Activated T-helper 2 cell treated with anti-CD3 and anti-CD28 coated beads, Interferon-gamma antibody, Interleukin-2, Interleukin-4, amounts not matched to agents 10 μg/mL and 5 μg/mL and 100 μg/mL, durations not matched to agents 14 hours and 24 hours and 36 hours (primary cell): ENCODE measurements at regions of chr15 and their contacts with region 1.

Region 1: DNA sequence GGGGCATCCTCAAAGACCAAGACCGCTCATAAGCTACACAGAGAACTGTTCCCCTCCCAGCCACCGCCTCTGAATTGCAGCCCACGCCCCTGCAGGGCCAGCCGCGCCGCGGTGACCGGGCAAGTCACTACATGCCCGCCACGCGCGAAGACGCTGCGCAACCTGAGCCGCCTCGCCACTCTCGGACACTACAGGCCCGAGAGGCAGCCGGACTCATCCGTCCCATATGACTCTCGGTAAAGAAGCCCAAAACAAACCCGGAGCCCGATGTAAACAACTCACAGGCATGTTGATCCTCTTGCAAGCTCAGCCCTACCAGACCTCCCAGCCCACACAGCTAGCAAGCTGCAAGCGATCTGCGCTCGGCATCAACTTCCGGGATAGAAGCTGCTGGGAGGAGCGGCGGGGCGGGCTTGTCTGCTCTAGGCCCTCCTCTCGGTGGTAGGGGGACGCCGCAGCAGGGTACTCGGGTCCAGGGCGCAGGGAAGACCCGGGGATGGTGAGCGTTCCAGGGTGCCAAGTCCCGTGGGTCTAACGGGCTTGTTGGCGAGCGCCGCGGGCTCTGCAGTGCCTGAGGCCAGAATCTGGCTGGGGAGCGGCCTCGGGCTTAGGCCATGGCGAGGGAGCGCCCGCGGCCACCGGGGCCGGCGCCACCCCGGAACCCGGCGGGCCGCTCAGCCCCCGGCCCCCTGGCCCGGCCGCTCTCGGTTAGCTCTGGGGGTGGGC is at the start of gene RPS27L:
- DNase-seq: peak; percentile 87
- H3K4me3 Mint-ChIP-seq: peak within 1 kb of the TSS; percentile 97
- H3K27ac Mint-ChIP-seq: peak within 1 kb of the TSS; percentile 97
- H3K4me1 Mint-ChIP-seq: peaks cover 14% of the 10 kb centered on the region
- H3K27me3 Mint-ChIP-seq: no peaks in the 10 kb centered on the region
- total RNA-seq, gene RPS27L: 164 and 167 TPM in 2 replicates

Region 2: DNA sequence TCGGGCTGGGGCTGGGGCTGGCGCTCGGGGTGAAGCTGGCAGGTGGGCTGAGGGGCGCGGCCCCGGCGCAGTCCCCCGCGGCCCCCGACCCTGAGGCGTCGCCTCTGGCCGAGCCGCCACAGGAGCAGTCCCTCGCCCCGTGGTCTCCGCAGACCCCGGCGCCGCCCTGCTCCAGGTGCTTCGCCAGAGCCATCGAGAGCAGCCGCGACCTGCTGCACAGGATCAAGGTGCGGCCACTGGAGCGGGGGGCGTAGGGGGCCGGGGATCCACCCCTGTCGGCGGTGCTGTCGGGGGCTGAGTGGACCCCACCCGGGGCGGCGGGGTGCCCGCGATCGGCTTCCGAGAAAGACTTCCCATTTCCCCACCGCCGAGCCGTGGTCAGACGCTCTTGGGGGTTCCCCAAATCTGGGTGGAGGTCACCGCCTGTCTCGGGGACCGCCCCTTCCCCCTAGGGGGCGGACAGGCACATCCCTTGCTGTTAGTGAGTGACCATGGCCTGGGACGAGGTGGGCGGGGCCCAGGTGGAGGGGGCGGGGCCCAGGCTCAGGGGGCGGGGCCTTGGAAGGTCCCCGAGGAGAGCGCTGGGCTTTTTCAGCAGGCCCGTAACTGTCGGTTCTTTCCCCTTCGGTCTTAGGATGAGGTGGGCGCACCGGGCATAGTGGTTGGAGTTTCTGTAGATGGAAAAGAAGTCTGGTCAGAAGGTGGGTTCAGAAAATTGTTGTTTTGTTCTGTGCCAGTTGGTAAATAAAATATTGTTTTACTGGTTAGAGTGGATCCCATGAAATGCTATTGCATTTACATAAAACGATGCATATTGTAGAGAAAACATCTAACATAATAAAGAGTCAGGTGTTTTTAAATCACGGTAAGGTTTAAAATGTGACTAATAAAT is 35.0 kb before region 1 on chr15:
- intact Hi-C with region 1: loop called (anchors 1 kb)
- DNase-seq: peak; percentile 77
- H3K4me3 Mint-ChIP-seq: peak overlapping the region; percentile 91
- H3K27ac Mint-ChIP-seq: peak overlapping the region; percentile 47
- H3K4me1 Mint-ChIP-seq: peaks cover 8% of the 10 kb centered on the region
- H3K27me3 Mint-ChIP-seq: peaks cover 1% of the 10 kb centered on the region

Region 3: GRCh38 chr15:63172376-63173109 is 15.3 kb after region 1 on chr15:
- intact Hi-C with region 1: loop called (anchors 2 kb)
- DNase-seq: no peak
- H3K4me3 Mint-ChIP-seq: no peak overlapping the region
- H3K27ac Mint-ChIP-seq: no peak overlapping the region
- H3K4me1 Mint-ChIP-seq: peaks cover 9% of the 10 kb centered on the region
- H3K27me3 Mint-ChIP-seq: no peaks in the 10 kb centered on the region

Region 4: GRCh38 chr15:63244399-63244798 is 87.1 kb after region 1 on chr15:
- intact Hi-C with region 1: loop called (anchors 2 kb)
- DNase-seq: no peak
- H3K4me3 Mint-ChIP-seq: peak overlapping the region; percentile 19
- H3K27ac Mint-ChIP-seq: peak overlapping the region; percentile 77
- H3K4me1 Mint-ChIP-seq: peaks cover 51% of the 10 kb centered on the region
- H3K27me3 Mint-ChIP-seq: no peaks in the 10 kb centered on the region

Region 5: DNA sequence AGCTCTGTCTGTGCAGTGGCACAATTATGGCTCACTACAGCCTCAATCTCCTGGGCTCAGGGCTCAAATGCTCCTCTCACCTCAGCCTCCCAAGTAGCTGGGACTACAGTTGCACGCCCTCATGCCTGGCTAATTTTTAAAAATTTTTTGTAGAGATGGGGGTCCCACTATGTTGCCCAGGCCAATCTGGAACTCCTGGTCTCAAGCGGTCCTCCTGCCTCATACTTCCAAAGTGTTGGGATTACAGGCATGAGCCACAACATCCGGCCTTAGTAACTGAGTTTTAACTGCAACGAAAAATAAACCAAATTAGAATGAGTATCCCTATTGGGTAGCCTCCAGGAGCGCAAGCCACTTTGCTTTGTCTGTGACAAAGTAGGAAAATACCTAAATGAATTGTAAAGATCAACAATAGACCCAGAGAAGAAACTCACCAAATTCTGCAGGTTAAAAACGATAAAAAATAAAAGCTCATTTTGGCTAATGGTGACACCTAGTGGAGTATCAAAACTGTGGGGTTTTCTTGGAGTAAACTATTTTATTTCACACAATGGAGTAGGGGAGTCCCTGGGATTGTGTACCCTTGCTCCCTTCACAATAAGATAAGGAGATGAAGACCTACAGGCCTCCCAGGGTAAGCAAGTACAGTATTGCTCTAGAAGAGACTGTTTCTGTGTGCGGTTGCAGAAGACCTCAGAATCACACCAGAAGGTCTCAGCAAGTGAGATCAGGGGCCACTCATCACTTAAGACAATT is 245.4 kb after region 1 on chr15:
- intact Hi-C with region 1: loop called (anchors 10 kb)
- DNase-seq: no peak
- H3K4me3 Mint-ChIP-seq: no peak overlapping the region
- H3K27ac Mint-ChIP-seq: no peak overlapping the region
- H3K4me1 Mint-ChIP-seq: peaks cover 29% of the 10 kb centered on the region
- H3K27me3 Mint-ChIP-seq: no peaks in the 10 kb centered on the region